CD4-positive, alpha-beta T cell (primary cell): ENCODE measurements at regions of chr9 and their contacts with region 1.

Region 1: DNA sequence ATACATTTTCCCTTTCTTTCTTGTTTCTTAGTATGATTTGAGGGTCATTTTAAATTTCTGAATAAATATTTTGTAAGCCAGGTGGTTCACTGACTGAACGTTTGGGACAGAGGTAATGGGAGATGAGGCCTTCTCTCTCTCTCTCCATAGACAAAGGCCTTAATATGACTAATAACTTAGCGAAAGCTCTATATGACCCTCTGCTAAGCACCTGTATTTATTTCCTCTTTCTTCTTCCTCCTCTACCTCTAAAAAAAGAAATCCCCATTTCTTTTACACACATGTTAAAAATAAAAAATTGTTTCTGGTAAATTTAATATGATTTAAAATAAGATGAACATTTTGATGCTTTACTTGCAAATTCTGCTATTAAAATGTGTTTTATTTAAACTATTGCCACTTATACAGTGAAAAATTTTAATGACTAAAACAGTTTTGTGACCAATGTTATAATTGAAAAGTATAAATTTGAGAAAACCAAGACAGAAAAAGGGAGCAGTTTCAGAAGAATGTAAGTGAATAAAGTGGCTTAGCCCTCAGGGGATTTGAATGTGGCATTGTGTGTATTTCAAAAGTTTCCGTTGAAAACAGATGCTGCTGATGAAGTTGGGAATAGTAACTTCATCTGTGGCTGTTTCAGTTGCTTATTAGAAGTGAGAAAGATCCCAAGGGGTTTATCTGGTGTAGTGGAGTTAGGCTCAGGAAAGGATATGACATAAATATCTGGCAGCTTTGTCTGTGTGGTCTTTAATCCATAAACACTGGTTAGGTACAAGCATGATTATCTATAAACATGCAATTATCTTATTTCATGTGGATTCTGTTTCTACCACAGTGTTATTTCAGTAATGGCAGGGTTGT is 128.6 kb upstream of the GRHPR start:
- DNase-seq: no peak
- ATAC-seq: no peak
- H3K4me3 ChIP-seq: no peak overlapping the region
- H3K4me3 Mint-ChIP-seq: no peak overlapping the region
- H3K27ac ChIP-seq: no peak overlapping the region
- H3K27ac Mint-ChIP-seq: no peak overlapping the region
- H3K4me1 ChIP-seq: peaks cover 3% of the 10 kb centered on the region
- H3K4me1 Mint-ChIP-seq: peaks cover 72% of the 10 kb centered on the region
- H3K27me3 ChIP-seq: no peaks in the 10 kb centered on the region
- H3K27me3 Mint-ChIP-seq: no peaks in the 10 kb centered on the region
- CTCF ChIP-seq: no peak

Region 2: DNA sequence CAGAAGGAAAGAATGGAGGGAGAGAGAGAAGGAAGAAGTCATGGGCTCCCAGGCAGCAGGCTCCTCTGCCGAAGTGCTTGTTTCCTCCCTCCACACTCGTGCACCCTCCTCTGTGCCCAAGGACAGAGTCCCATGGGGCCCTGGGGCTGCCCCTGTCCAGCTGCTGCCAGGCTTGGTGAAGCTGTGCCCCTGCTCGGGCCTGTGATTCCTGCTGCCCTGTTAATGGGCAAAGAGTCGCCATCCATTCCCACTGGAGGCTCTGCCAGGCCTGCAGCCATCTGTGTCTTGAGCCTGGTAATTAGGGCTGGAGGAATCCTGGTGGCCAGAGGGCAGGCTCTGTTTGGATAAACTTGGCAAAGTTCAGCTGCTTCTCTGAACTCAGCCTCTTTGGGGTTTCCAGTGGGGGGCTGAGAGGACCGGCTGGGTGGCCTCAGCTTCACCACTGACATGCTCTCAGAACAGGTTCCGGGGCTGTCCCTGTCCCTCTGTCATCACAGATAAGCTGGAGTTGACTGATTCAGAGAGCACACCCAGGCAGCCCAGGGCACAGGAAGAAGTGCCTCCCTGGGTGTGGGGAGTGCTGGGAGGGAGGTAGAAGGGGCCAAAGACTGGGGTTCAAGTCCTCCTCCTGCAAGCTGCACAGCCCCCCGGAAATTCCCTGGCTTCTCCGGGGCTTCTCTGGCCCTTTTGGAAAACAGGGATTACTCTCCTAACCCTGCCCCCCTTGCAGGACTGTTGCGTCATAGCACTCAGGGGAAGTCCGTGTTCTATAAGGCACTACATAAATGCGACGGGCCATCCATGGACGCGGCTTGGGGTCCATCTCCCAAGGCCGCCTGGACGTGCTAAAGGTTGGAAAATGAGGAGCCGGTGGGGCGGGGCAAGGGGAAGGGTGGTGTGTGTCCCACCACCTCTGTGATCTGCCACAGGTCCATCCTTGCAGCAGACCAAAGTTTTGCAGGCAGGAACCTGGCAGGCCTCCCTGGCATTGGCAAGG is 414.6 kb before region 1 on chr9:
- CTCF ChIA-PET with region 1: no interaction called
- POLR2A ChIA-PET with region 1: no interaction called
- intact Hi-C with region 1: no loop called
- DNase-seq: no peak
- ATAC-seq: no peak
- H3K4me3 ChIP-seq: no peak overlapping the region
- H3K4me3 Mint-ChIP-seq: no peak overlapping the region
- H3K27ac ChIP-seq: no peak overlapping the region
- H3K27ac Mint-ChIP-seq: no peak overlapping the region
- H3K4me1 ChIP-seq: no peaks in the 10 kb centered on the region
- H3K4me1 Mint-ChIP-seq: no peaks in the 10 kb centered on the region
- H3K27me3 ChIP-seq: no peaks in the 10 kb centered on the region
- H3K27me3 Mint-ChIP-seq: peaks cover 12% of the 10 kb centered on the region
- CTCF ChIP-seq: no peak

Region 3: DNA sequence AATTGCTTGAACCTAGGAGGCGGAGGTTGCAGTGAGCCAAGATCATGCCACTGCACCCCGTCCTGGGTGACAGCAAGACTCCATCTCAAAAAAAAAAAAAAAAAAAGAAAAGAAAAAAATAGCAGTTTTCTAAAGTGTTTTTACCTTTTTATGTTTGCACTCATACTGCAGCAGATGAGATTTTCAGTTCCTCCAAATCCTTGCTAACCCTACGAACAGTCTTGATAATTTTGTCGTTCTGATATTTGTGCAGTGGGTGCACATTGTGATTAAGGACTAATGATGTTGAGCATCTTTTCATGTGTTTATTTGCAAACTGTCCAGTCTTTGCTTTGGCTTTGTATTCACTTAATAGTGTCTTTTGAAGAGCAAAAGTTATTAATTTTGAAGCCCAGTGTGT is 130.6 kb before region 1 on chr9:
- CTCF ChIA-PET with region 1: no interaction called
- POLR2A ChIA-PET with region 1: no interaction called
- intact Hi-C with region 1: loop called in 1 of 2 experiments (anchors 10 kb)
- DNase-seq: no peak
- ATAC-seq: no peak
- H3K4me3 ChIP-seq: no peak overlapping the region
- H3K4me3 Mint-ChIP-seq: no peak overlapping the region
- H3K27ac ChIP-seq: no peak overlapping the region
- H3K27ac Mint-ChIP-seq: no peak overlapping the region
- H3K4me1 ChIP-seq: no peaks in the 10 kb centered on the region
- H3K4me1 Mint-ChIP-seq: peaks cover 35% of the 10 kb centered on the region
- H3K27me3 ChIP-seq: no peaks in the 10 kb centered on the region
- H3K27me3 Mint-ChIP-seq: no peaks in the 10 kb centered on the region
- CTCF ChIP-seq: no peak

Region 4: GRCh38 chr9:37333288-37333687 is 39.4 kb after region 1 on chr9:
- CTCF ChIA-PET with region 1: no interaction called
- POLR2A ChIA-PET with region 1: no interaction called
- intact Hi-C with region 1: no loop called
- DNase-seq: no peak
- ATAC-seq: no peak
- H3K4me3 ChIP-seq: no peak overlapping the region
- H3K4me3 Mint-ChIP-seq: no peak overlapping the region
- H3K27ac ChIP-seq: no peak overlapping the region
- H3K27ac Mint-ChIP-seq: no peak overlapping the region
- H3K4me1 ChIP-seq: no peaks in the 10 kb centered on the region
- H3K4me1 Mint-ChIP-seq: no peaks in the 10 kb centered on the region
- H3K27me3 ChIP-seq: no peaks in the 10 kb centered on the region
- H3K27me3 Mint-ChIP-seq: no peaks in the 10 kb centered on the region
- CTCF ChIP-seq: no peak